ENCODE measurements at regions of chr20 and their contacts with region 1.

Region 1: GRCh38 chr20:58192567-58192966 is 35.9 kb downstream of the ANKRD60 start:
- DNase-seq: peak; percentile 60
- CTCF ChIP-seq: peak; percentile 77

Region 2: GRCh38 chr20:58209652-58210397 is 17.3 kb after region 1 on chr20:
- CTCF ChIA-PET with region 1: interaction called, 79 read pairs
- POLR2A ChIA-PET with region 1: no interaction called
- DNase-seq: peak; percentile 93
- CTCF ChIP-seq: peak; percentile 100